ENCODE measurements at regions of chrX and their contacts with region 1.

Region 1: DNA sequence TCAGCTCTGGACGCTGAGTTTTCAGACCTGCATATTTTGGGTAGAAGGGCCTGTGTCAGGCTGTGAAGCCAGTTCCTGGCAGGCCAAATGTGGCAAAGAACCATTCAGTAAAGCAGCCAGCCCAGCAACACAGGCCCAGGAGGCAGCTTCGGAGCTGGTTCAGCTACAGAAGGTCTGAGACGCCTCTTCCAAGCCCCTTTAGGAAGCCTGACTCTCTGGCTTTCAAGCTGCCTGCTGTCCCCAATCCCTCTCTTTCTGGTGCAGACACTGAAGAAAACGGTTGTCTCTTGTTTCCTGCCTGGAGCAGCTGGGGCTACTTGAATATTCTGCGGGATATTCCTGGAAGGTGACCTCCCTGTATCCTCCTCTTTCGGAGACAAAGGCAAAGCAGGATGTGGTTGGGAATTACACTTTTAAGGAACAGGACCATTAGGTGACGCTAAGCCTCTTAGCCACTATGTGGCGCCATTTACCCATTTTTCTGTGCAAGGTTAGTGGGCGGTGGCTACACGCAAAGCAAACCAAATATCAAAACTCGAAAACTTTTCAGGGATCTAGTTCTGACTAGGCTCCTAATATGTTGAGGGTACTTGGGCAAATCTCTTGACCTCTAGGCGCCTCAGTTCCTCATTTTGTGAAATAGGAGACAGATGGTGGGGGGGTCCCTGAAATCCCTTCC is 47.2 kb upstream of the LAS1L start:
- DNase-seq: peak; percentile 70
- H3K4me3 ChIP-seq: no peak overlapping the region
- H3K27ac ChIP-seq: no peak overlapping the region
- H3K4me1 ChIP-seq: no peaks in the 10 kb centered on the region
- H3K27me3 ChIP-seq: no peaks in the 10 kb centered on the region
- CTCF ChIP-seq: peak; percentile 76

Region 2: GRCh38 chrX:65679071-65679540 is 97.3 kb after region 1 on chrX:
- intact Hi-C with region 1: no loop called
- DNase-seq: no peak
- H3K4me3 ChIP-seq: no peak overlapping the region
- H3K27ac ChIP-seq: peak overlapping the region; percentile 15
- H3K4me1 ChIP-seq: no peaks in the 10 kb centered on the region
- H3K27me3 ChIP-seq: no peaks in the 10 kb centered on the region
- CTCF ChIP-seq: no peak

Region 3: DNA sequence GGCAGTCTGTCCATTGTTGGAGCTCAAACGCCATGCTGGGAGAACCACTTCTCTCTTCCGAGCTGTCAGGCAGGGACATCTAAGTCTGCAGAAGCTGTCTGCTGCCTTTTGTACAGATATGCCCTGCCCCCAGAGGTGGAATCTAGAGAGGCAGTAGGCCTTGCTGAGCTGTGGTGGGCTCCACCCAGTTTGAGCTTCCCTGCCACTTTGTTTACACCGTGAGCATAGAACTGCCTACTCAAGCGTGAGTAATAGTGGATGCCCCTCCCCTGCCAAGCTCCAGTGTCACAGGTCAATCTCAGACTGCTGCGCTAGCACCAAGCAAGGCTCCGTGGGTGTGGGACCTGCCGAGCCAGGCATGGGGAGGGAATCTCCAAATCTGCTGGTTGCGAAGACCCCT is 312.3 kb after region 1 on chrX:
- intact Hi-C with region 1: no loop called
- DNase-seq: no peak
- H3K4me3 ChIP-seq: no peak overlapping the region
- H3K27ac ChIP-seq: no peak overlapping the region
- H3K4me1 ChIP-seq: no peaks in the 10 kb centered on the region
- H3K27me3 ChIP-seq: no peaks in the 10 kb centered on the region
- CTCF ChIP-seq: no peak

Region 4: GRCh38 chrX:65985922-65986588 is 404.3 kb after region 1 on chrX:
- intact Hi-C with region 1: loop called (anchors 5 kb)
- DNase-seq: peak; percentile 48
- H3K4me3 ChIP-seq: no peak overlapping the region
- H3K27ac ChIP-seq: no peak overlapping the region
- H3K4me1 ChIP-seq: no peaks in the 10 kb centered on the region
- H3K27me3 ChIP-seq: no peaks in the 10 kb centered on the region
- CTCF ChIP-seq: peak; percentile 52

Region 5: DNA sequence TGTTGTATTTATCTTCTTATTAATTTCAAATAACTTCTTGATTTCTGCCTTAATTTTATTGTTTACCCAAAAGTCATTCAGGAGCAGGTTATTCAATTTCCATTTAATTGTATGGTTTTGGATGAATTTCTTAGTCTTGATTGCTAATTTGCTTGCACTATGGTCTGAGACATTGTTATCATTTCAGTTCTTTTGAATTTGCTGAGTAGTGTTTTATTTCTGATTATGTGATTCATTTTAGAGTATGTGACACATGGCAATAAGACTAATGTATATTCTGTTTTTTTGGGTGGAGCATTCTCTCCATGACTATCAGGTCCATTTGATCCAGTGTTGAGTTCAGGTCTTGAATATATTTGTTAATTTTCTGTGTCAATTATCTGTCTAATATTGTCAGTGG is 820.4 kb after region 1 on chrX:
- intact Hi-C with region 1: loop called (anchors 5 kb)
- DNase-seq: no peak
- H3K4me3 ChIP-seq: no peak overlapping the region
- H3K27ac ChIP-seq: no peak overlapping the region
- H3K4me1 ChIP-seq: no peaks in the 10 kb centered on the region
- H3K27me3 ChIP-seq: no peaks in the 10 kb centered on the region
- CTCF ChIP-seq: no peak

Measured in colonic mucosa (tissue), 4 donors.